ENCODE measurements at regions of chr17 and their contacts with region 1.

Region 1: GRCh38 chr17:8222630-8223356 is 12.4 kb upstream of the AURKB start:
- DNase-seq: peak; percentile 50 to 90 (median 60)
- ATAC-seq: peak; percentile 54
- H3K4me3 ChIP-seq: peak overlapping the region; percentile 60
- H3K27ac ChIP-seq: peak overlapping the region; percentile 91
- H3K4me1 ChIP-seq: peaks cover 27 to 30% of the 10 kb centered on the region in 2 experiments; a peak in 4 of 5 replicates
- H3K27me3 ChIP-seq: no peaks in the 10 kb centered on the region
- CTCF ChIP-seq: no peak
- EP300 ChIP-seq: no peak
- POLR2A ChIP-seq: peak; percentile 85
- RAD21 ChIP-seq: no peak

Region 2: DNA sequence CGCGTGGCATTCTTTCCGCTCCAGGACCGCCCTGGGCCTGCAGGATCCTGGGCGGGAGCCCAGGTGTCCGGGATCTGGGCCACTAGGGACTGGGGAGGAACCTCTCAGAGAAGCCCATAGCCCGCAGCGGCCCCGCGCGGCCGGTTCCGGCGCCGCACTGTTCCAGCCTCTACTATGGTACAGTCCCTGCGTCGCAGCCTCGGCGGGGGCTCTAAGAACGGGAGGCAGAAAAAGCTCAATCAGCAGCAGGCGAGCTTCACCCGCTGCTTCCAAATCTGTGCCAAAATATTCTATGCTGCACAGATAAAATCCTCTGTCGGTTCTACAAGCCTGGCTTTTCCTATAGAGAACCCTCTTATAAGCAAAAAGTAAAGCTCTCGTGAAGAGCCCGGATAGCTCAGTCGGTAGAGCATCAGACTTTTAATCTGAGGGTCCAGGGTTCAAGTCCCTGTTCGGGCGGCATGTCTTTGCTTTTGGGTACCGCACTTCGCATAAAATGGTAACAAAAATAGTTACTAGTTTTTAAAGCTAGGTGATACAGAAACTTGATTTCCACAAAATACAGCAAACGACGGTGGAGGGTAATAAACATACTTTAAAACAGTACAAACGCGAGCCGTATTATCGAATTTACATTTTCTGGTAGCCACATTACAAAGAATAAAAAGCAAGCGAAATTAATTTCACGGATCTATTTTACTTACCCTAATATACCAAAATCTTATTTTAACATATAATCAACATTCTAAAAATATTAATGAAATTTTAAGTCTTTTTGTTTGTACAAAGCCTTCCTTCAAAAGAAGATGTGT is 103.8 kb before region 1 on chr17:
- CTCF ChIA-PET with region 1: no interaction called
- POLR2A ChIA-PET with region 1: interaction called, 3 read pairs
- in situ Hi-C with region 1: loop called (anchors 5 kb)
- intact Hi-C with region 1: loop called (anchors 2 kb)
- DNase-seq: peak; percentile 73 to 85 (median 76)
- ATAC-seq: peak; percentile 81
- H3K4me3 ChIP-seq: peak overlapping the region; percentile 65
- H3K27ac ChIP-seq: peak overlapping the region; percentile 63; the same call in 2 of the 3 replicates
- H3K4me1 ChIP-seq: peaks cover 20 to 43% of the 10 kb centered on the region in 2 experiments
- H3K27me3 ChIP-seq: peaks cover 14 to 41% of the 10 kb centered on the region in 2 experiments
- CTCF ChIP-seq: peak; percentile 77 to 89 (median 87)
- EP300 ChIP-seq: peak; percentile 32; the same call in 1 of the 2 replicates
- POLR2A ChIP-seq: no peak
- RAD21 ChIP-seq: peak; percentile 52 to 68

Region 3: DNA sequence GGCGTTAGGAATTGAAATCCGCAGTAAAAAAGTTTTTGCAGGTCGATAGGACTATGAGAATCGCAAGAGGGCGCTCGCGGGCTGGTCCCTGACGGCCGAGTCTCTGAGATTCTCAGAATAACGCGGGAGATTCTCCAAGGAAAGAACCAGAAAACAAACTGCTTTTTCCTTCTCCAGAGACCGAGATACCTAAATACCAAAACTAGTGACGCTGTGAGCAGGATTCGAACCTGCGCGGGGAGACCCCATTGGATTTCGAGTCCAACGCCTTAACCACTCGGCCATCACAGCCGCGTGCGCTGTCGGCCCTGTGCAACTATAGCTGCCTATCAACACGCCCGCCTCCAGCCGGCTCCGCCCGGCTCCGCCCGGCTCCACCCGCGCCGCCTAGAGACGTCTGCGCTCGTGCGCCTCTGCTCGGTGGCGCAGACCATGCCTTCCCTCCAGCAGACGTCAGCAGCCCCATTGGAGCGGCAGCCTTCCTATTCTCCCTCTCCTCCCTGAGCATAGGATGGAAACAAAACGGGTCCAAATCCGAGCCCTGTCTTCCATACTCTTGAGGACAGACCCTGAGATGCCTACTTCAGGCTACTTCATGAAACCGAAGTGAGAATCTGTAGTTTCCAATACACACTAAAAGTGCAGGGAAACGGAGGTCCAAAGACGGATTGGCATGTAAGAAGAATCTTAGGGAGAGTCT is 84.0 kb before region 1 on chr17:
- CTCF ChIA-PET with region 1: no interaction called
- POLR2A ChIA-PET with region 1: interaction called, 6 read pairs
- in situ Hi-C with region 1: no loop called
- intact Hi-C with region 1: loop called (anchors 1 kb)
- DNase-seq: peak; percentile 73 to 94 (median 77)
- ATAC-seq: peak; percentile 95
- H3K4me3 ChIP-seq: peak overlapping the region; percentile 59
- H3K27ac ChIP-seq: peak overlapping the region; percentile 95
- H3K4me1 ChIP-seq: peaks cover 6 to 28% of the 10 kb centered on the region in 2 experiments; a peak in 4 of 5 replicates
- H3K27me3 ChIP-seq: no peaks in the 10 kb centered on the region
- CTCF ChIP-seq: peak; percentile 84 to 98 (median 96)
- EP300 ChIP-seq: peak; percentile 42; the same call in 1 of the 2 replicates
- POLR2A ChIP-seq: no peak; the same call in 1 of the 2 replicates
- RAD21 ChIP-seq: peak; percentile 75 to 77

Region 4: DNA sequence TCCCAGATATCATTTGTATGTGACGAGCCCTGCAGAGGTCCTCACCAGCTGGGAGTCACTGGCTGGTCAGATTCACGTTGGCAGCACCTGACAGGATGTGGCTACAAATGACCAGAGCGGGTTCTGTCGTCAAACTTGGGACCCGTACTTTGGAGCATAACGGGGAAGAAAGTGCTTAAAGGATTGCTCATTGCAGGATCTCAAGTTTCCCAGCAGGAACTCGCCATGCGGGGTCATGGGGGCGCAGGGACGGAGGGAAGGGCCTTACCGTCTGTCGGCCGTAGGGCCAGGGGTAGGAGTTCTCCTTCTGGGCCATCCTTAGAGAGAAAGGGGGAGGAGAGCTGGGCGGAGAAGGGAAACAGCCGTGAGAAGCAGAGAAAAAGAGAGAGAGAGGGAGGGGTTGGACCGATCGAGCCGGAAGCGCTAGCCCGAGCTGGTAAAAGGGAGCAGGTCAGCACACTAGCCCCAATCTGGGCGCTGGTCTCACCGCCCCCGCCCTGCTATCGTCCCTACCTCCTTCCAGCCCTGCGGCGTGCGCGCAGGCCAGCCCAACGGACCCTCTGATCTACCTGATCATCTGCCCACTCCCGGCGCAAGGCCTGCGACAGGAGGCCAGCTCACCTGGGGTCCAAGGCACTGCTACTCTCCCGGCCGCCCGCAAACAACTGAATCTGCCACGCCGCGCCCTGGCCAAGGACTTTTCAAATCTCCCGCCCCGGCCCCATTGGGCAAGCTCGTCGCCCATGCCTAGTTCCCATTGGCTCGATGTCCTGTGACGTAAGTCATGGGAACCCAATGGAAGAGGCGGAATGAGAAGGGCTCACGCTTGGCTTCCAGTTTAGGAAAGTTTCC is 12.7 kb before region 1 on chr17 and contains the start of gene AURKB:
- CTCF ChIA-PET with region 1: no interaction called
- POLR2A ChIA-PET with region 1: interaction called, 89 read pairs
- in situ Hi-C with region 1: no loop called
- intact Hi-C with region 1: no loop called
- DNase-seq: peak; percentile 85 to 95 (median 88)
- ATAC-seq: peak; percentile 92
- H3K4me3 ChIP-seq: peak within 1 kb of the TSS; percentile 73
- H3K27ac ChIP-seq: peak within 1 kb of the TSS; percentile 94
- H3K4me1 ChIP-seq: peaks cover 17 to 25% of the 10 kb centered on the region in 2 experiments; a peak in 4 of 5 replicates
- H3K27me3 ChIP-seq: no peaks in the 10 kb centered on the region
- CTCF ChIP-seq: no peak
- EP300 ChIP-seq: no peak
- POLR2A ChIP-seq: peak; percentile 95
- RAD21 ChIP-seq: no peak
- polyA plus RNA-seq, gene AURKB: 63.4 to 101 TPM

Region 5: DNA sequence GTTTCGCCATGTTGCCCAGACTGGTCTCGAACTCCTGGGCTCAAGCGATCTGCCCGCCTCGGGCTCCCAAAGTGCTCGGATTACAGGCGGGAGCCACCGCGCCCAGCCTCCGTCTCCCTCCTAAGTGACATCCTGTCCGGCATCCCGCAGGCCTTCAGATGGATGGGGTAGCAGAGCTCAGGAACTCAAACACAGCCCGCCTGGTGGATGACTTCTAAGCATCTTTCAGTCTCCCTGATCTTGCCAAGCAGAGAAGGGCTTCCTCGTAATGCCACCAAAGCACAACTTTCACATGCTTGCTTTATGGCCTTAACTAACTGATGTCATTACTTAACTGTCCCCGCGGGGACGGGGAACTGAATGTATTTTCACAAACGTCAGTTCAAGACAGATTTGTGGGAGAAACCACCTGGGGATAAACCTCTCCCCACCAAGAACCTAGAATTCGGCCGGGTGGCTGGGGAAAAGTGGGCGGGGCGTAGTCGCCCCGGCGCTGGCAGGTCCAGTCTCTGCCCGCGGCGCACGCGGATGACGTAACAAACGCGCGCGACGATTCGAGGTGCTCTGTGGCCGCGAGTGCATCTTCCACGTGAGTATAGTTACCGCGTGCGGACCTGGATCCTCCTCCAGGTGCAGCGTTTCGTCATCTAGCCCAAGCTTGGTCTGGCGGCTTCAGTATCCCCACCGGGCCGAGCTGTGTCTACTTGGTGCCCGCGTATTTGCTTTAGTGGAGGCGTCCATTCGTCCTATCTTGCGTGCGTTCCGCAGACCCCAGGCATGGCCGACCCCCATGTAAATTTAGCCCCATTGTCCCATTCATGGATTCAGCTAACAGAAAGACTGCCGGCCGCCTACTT is 26.2 kb after region 1 on chr17 and contains the start of gene PFAS:
- CTCF ChIA-PET with region 1: no interaction called
- POLR2A ChIA-PET with region 1: interaction called, 8 read pairs
- in situ Hi-C with region 1: no loop called
- intact Hi-C with region 1: loop called (anchors 1 kb)
- DNase-seq: peak; percentile 85 to 95 (median 87)
- ATAC-seq: peak; percentile 72
- H3K4me3 ChIP-seq: peak within 1 kb of the TSS; percentile 96
- H3K27ac ChIP-seq: peak within 1 kb of the TSS; percentile 98
- H3K4me1 ChIP-seq: peaks cover 2 to 5% of the 10 kb centered on the region in 2 experiments; a peak in 3 of 5 replicates
- H3K27me3 ChIP-seq: no peaks in the 10 kb centered on the region
- CTCF ChIP-seq: 0 out of 6 replicates have a peak, but pooled peaks of 1 of the 3 experiments have one; percentile 0
- EP300 ChIP-seq: no peak
- POLR2A ChIP-seq: peak; percentile 80
- RAD21 ChIP-seq: no peak
- polyA plus RNA-seq, gene PFAS: 11.6 to 18.2 TPM

Region 6: DNA sequence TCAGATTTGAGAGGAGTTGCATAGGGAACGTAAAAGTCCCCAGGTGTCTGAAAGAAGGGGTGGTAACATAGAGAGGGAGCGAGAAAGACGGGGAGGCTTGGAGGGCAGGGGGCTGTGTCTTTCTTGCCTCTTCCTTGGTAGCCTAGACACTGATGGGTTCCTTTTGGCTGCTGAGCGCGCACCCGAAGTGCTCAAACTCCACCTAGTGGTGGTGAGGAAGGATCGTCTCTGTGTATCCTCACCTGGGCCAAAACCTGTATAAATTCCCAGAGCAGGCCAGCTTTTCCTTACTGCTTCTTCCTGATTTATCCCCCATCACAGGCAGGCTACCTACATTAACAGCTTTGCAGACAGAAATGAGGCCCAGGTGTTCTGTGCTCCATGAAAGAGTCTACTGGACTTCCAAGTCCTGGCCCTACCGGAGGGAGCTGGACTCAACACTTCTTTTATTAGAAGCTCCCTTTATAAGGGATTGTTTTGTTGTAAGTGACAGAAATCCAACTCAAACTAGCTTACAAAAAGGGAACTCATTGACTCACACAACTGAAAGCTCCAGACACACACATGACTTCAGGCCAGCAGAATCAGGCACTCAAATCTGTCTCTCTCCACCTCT is 77.9 kb after region 1 on chr17:
- CTCF ChIA-PET with region 1: no interaction called
- POLR2A ChIA-PET with region 1: interaction called, 4 read pairs
- in situ Hi-C with region 1: no loop called
- intact Hi-C with region 1: loop called (anchors 2 kb)
- DNase-seq: peak; percentile 62 to 73 (median 65)
- ATAC-seq: peak; percentile 93
- H3K4me3 ChIP-seq: no peak overlapping the region
- H3K27ac ChIP-seq: no peak overlapping the region
- H3K4me1 ChIP-seq: peaks cover 4 to 7% of the 10 kb centered on the region in 2 experiments; a peak in 4 of 5 replicates
- H3K27me3 ChIP-seq: no peaks in the 10 kb centered on the region
- CTCF ChIP-seq: peak; percentile 75 to 81 (median 81)
- EP300 ChIP-seq: no peak
- POLR2A ChIP-seq: no peak
- RAD21 ChIP-seq: peak; percentile 59 to 86

Region 7: GRCh38 chr17:8383143-8383822 is 160.5 kb after region 1 on chr17 and contains the start of gene RPL26:
- CTCF ChIA-PET with region 1: no interaction called
- POLR2A ChIA-PET with region 1: interaction called, 3 read pairs
- in situ Hi-C with region 1: no loop called
- intact Hi-C with region 1: loop called (anchors 10 kb)
- DNase-seq: peak; percentile 83 to 96 (median 86)
- ATAC-seq: peak; percentile 87
- H3K4me3 ChIP-seq: peak within 1 kb of the TSS; percentile 53
- H3K27ac ChIP-seq: peak within 1 kb of the TSS; percentile 83
- H3K4me1 ChIP-seq: peaks cover 34 to 39% of the 10 kb centered on the region in 2 experiments
- H3K27me3 ChIP-seq: no peaks in the 10 kb centered on the region
- CTCF ChIP-seq: peak; percentile 84 to 93 (median 86)
- EP300 ChIP-seq: no peak
- POLR2A ChIP-seq: no peak; the same call in 1 of the 2 replicates
- RAD21 ChIP-seq: peak; percentile 63 to 66
- polyA plus RNA-seq, gene RPL26: 1,706 to 1,892 TPM

Region 8: GRCh38 chr17:8518326-8518725 is 295.5 kb after region 1 on chr17:
- CTCF ChIA-PET with region 1: no interaction called
- POLR2A ChIA-PET with region 1: no interaction called
- in situ Hi-C with region 1: no loop called
- intact Hi-C with region 1: no loop called
- DNase-seq: no peak
- ATAC-seq: no peak
- H3K4me3 ChIP-seq: no peak overlapping the region
- H3K27ac ChIP-seq: no peak overlapping the region
- H3K4me1 ChIP-seq: no peaks in the 10 kb centered on the region
- H3K27me3 ChIP-seq: no peaks in the 10 kb centered on the region
- CTCF ChIP-seq: no peak
- EP300 ChIP-seq: no peak
- POLR2A ChIP-seq: no peak
- RAD21 ChIP-seq: no peak

Measured in K562 (cell line).